Right ventricle myocardium inferior (tissue), 1 donor: ENCODE measurements at regions of chr1 and their contacts with region 1.

Region 1: GRCh38 chr1:45303582-45304310 is 22.9 kb upstream of the HPDL start:
- DNase-seq: peak; percentile 98
- ATAC-seq: peak; percentile 98

Region 2: DNA sequence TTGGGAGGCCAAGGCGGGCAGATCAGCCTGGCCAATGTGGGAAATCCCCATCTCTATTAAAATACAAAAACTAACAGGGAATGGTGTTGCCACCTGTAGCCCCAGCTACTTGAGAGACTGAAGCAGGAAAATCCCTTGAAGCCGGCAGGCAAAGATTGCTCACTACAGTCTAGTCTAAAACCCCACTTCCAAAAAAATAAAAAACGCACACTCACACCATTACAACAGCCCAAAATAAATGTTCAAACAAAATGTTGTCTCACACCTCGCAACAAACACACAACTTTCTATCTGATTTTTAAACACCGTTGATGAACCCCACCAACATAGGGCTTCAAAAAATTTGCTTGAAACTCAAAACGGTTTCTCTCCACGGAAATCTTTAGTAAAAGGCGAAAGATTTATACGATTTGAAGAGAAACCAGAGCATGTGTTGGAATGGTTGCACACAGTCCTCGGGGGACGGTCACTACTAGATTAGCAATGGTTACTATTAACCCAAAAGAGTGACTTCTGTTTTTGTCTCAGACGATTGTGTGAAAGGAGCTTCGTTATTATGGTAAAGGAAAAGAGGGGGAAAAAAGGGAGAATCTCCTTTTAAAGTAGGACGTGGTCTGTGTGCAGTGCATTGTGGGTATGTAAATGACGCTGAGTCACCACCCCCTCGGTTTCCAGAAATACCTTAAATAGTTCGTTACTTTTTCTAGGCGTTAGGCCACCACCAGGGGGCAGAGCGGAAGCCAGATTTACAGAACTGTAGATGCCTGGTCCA is 572.8 kb before region 1 on chr1 and contains the start of gene RNU5D-1:
- intact Hi-C with region 1: loop called (anchors 2 kb)
- DNase-seq: peak; percentile 93
- ATAC-seq: peak; percentile 91
- total RNA-seq, gene RNU5D-1: not detected

Region 3: DNA sequence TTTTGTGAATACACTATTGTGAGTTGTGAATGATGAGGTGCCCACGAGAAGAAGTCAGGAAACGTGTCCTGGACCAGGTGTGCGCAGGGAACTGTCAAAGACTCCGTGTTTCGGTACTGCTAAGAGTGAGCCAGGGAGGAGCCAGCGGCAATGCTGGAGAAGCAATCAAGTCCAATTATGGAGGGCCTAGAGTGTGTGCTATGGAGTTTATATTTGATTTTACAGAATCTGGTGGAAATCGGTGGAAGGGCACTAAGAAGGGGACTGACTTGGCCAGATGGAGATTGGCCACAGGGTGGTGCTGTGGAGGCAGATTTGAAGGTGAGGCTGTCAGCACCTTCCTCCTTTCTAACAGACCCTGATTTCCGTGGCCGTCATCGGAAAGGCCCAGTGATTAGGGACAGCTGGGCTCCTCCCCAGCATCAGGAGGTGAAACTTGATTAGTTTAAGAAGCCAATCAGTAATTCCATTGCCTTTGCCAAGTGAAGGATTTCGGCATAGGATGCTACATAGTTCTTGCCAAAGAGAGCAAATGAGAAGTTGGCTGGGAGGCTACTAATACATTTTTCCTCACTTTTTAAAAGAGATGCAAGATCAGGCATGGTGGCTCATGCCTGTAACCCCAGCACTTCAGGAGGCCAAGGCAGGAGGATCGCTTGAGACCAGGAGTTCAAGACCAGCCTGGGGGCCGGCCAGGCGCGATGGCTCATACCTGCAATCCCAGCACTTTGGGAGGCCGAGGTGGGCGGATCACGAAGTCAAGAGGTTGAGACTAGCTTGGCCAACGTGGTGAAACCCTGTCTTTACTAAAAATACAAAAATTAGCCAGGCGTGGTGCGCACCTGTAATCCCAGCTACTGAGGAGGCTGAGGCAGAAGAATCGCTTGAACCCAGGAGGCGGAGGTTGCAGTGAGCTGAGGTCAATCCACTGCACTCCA is 467.7 kb before region 1 on chr1:
- intact Hi-C with region 1: loop called (anchors 2 kb)
- DNase-seq: peak; percentile 86
- ATAC-seq: peak; percentile 86

Region 4: GRCh38 chr1:45011837-45012638 is 291.7 kb before region 1 on chr1 and contains the start of gene UROD:
- intact Hi-C with region 1: loop called (anchors 1 kb)
- DNase-seq: peak; percentile 96
- ATAC-seq: peak; percentile 95
- total RNA-seq, gene UROD: 71.7 TPM

Region 5: GRCh38 chr1:45339789-45340570 is 36.2 kb after region 1 on chr1 and contains the starts of genes MUTYH and TOE1:
- intact Hi-C with region 1: loop called (anchors 2 kb)
- DNase-seq: peak; percentile 98
- ATAC-seq: peak; percentile 96
- total RNA-seq, gene MUTYH: 8.3 TPM
- total RNA-seq, gene TOE1: 3.8 TPM

Region 6: DNA sequence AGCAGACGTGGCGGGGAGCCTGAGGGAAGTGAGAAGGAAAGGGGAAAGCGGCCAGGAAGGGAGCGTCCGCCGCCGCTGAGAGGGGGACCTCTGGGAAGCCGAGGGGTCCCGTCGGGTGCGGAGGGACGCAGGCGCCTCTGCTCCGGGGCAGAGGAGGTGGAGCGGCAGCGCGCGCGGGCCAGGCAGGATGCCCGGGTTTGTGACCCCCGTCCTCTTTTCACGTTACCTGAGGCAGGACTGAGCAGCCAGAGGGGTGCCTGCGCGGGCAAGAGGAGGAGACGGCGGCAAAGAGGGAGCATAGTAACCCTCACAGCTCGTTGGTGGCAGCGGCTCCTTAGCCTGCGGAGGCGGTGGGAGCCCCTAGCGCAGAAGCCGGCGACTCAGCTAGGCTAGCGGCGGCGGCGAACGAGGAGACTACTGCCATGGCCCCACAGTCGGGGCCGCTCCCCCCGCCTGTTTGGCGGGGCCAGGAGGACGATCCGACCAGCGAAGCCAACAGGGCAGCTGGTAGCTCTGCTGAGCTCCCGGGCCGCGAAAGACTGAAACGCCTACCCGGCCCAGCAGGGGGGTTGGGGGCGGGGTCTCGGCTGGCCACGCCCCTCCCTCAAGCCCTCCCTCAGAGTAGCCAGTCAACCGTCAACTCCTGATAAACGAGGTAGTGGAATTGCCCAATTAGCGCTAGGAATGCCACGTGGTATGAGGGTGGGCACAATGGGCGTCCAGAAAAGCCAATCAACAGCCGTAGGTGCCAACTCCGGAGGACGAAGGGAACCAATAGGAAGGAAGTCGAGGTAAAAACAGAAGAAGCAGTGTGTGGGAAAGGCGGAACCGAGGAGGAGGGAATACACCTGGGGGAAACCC is 187.1 kb after region 1 on chr1 and contains the start of gene TESK2:
- intact Hi-C with region 1: loop called (anchors 5 kb)
- DNase-seq: peak; percentile 95
- ATAC-seq: peak; percentile 98
- total RNA-seq, gene TESK2: 1.5 TPM